ENCODE measurements at regions of chr11 and their contacts with region 1.

Region 1: GRCh38 chr11:61384271-61385242 is 7.8 kb upstream of the TMEM216 start:
- DNase-seq: no peak
- ATAC-seq: no peak
- H3K4me3 ChIP-seq: no peak overlapping the region
- H3K4me3 Mint-ChIP-seq: no peak overlapping the region
- H3K27ac ChIP-seq: no peak overlapping the region
- H3K27ac Mint-ChIP-seq: no peak overlapping the region
- H3K4me1 ChIP-seq: peaks cover 6 to 8% of the 10 kb centered on the region in 2 donors
- H3K4me1 Mint-ChIP-seq: peaks cover 8% of the 10 kb centered on the region
- H3K27me3 ChIP-seq: no peaks in the 10 kb centered on the region
- H3K27me3 Mint-ChIP-seq: no peaks in the 10 kb centered on the region
- CTCF ChIP-seq: no peak

Region 2: DNA sequence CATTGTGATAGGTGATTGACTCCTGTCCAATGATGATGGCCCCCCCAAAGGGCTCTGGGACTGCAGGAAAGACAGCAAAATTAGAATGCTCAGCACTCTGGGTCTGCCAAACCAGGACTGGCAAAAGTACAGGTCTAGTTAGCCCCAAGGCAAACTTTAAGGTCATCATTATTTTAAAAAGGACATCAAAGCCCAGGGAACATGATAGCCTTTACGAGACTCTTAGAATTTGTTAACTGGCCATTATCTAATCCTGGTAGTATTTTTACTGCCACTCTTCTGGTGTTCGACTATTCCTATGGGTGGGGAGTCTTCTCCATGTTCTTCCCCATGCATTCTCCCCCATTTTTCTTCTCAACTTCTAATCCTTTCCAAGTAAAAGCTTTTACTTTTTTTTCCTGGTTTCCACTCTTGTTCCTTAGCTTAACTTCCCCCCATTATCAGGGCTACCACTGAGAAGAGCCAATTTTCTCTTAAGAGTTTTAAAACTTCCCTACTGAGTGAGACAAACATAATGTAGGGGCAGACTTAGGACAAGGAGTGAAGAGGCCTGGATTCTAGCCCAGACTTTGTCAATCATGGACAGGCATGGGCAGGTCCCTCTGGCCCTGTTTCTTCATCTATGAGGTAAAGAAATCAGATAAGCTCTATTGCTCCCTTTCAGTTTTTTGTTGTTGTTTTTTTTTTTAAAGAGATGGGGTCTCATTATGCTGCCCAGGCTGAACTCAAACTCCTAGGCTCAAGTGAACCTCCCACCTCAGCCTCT is 58.7 kb before region 1 on chr11:
- CTCF ChIA-PET with region 1: interaction called, 34 read pairs
- POLR2A ChIA-PET with region 1: no interaction called
- intact Hi-C with region 1: no loop called
- DNase-seq: no peak
- ATAC-seq: no peak
- H3K4me3 ChIP-seq: no peak overlapping the region
- H3K4me3 Mint-ChIP-seq: no peak overlapping the region
- H3K27ac ChIP-seq: no peak overlapping the region
- H3K27ac Mint-ChIP-seq: no peak overlapping the region
- H3K4me1 ChIP-seq: no peaks in the 10 kb centered on the region
- H3K4me1 Mint-ChIP-seq: peaks cover 18% of the 10 kb centered on the region
- H3K27me3 ChIP-seq: no peaks in the 10 kb centered on the region
- H3K27me3 Mint-ChIP-seq: no peaks in the 10 kb centered on the region
- CTCF ChIP-seq: no peak

Region 3: DNA sequence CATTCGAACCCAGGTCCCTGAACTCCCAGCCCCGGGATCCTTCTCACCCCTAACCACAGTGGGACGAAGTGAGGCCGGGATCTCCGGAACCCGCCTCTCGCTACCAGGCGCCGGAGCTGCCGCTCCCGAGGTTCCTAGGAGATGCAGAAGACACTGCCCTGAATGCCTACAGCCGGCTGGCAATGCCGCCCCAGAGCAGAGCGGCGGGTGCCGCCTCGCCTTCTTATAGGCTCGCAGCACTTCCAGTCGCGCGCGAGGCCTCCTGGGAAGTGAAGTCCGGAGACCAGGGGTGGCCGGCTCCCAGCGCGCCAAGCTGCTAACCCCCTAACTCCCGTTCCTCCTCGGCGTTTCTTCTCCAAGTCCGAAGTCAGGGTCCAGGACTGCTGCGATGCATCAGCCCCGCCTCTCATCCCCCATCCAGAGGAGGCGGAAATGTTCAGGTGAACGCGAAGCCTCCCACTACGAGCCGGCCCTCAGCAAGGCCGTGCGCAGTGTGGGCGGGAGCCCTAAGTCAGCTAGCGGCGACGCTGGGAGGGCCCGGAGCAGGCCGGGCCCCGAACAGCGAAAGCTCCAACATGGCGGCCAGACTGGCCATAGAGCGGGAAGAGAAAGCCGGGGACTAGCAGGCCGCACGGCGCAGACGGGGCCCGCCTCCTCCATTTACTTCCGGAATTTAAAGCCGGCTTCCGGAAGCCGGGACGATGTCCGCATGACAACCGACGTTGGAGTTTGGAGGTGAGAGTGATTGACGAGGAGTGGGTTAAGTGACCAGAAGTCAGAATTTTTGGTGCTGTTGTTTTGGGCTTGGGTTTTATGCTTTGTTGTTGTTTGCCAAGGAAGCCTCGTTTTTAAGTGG is 22.6 kb before region 1 on chr11 and contains the starts of genes CYB561A3 and TMEM138:
- CTCF ChIA-PET with region 1: interaction called, 206 read pairs
- POLR2A ChIA-PET with region 1: interaction called, 3 read pairs
- intact Hi-C with region 1: loop called (anchors 1 kb)
- DNase-seq: peak; percentile 94
- ATAC-seq: peak; percentile 72
- H3K4me3 ChIP-seq: peak within 1 kb of the TSS; percentile 86 to 99 (median 97)
- H3K4me3 Mint-ChIP-seq: peak within 1 kb of the TSS; percentile 99
- H3K27ac ChIP-seq: peak within 1 kb of the TSS; percentile 93
- H3K27ac Mint-ChIP-seq: peak within 1 kb of the TSS; percentile 98
- H3K4me1 ChIP-seq: peaks cover 44 to 50% of the 10 kb centered on the region in 2 donors
- H3K4me1 Mint-ChIP-seq: peaks cover 53% of the 10 kb centered on the region
- H3K27me3 ChIP-seq: no peaks in the 10 kb centered on the region
- H3K27me3 Mint-ChIP-seq: no peaks in the 10 kb centered on the region
- CTCF ChIP-seq: no peak
- total RNA-seq, gene CYB561A3: 248 and 259 TPM in 2 replicates
- total RNA-seq, gene TMEM138: 84.3 and 85.3 TPM in 2 replicates

Region 4: GRCh38 chr11:61401558-61401957 is 17.0 kb after region 1 on chr11:
- CTCF ChIA-PET with region 1: interaction called, 21 read pairs
- POLR2A ChIA-PET with region 1: no interaction called
- intact Hi-C with region 1: no loop called
- DNase-seq: no peak
- ATAC-seq: no peak
- H3K4me3 ChIP-seq: no peak overlapping the region
- H3K4me3 Mint-ChIP-seq: no peak overlapping the region
- H3K27ac ChIP-seq: peak overlapping the region in 1 of 2 donors; percentile 30
- H3K27ac Mint-ChIP-seq: no peak overlapping the region
- H3K4me1 ChIP-seq: no peaks in the 10 kb centered on the region
- H3K4me1 Mint-ChIP-seq: no peaks in the 10 kb centered on the region
- H3K27me3 ChIP-seq: no peaks in the 10 kb centered on the region
- H3K27me3 Mint-ChIP-seq: no peaks in the 10 kb centered on the region
- CTCF ChIP-seq: no peak

Measured in B cell (primary cell).